Caco-2 (cell line): ENCODE measurements at regions of chr14 and their contacts with region 1.

Region 1: GRCh38 chr14:59028476-59029202 is 159.8 kb upstream of the DAAM1 start:
- DNase-seq: peak; percentile 67 to 71
- H3K4me3 ChIP-seq: no peak overlapping the region
- H3K4me3 Mint-ChIP-seq: no peak overlapping the region
- H3K27ac Mint-ChIP-seq: no peak overlapping the region
- H3K4me1 ChIP-seq: no peaks in the 10 kb centered on the region
- H3K4me1 Mint-ChIP-seq: peaks cover 9% of the 10 kb centered on the region
- H3K27me3 ChIP-seq: no peaks in the 10 kb centered on the region
- H3K27me3 Mint-ChIP-seq: peaks cover 7% of the 10 kb centered on the region
- CTCF ChIP-seq: peak; percentile 72 to 92

Region 2: DNA sequence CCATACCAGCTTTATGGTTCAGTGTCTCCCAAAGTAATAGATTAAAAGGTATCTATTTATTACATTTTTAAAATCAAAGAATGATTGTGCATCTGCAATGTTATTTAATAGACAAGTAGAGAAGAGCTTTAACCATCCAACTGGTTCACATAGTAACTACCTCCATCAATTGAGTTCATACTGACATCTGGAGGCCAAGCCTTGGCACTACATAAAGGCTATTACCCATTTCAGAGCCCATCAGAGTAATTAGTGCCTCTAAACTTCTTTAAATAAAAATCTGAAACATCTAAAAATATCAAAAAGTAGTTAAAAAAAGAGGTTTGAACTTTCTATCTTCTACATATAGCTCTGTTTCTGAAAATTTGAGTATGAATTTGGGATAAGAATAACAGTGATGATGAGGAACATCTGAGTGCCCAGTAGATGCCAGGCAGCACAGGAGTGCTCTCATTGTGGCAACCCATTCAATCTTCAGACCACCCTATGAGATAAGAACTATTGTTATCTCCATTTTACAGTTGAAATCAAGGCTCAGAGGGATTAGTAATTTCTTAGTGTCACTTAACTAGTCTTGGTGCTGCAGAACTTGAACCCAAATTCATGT is 26.9 kb after region 1 on chr14:
- CTCF ChIA-PET with region 1: interaction called, 9 read pairs
- POLR2A ChIA-PET with region 1: no interaction called
- intact Hi-C with region 1: loop called (anchors 1 kb)
- DNase-seq: peak in 1 of 2 experiments; percentile 37
- H3K4me3 ChIP-seq: no peak overlapping the region
- H3K4me3 Mint-ChIP-seq: no peak overlapping the region
- H3K27ac Mint-ChIP-seq: no peak overlapping the region
- H3K4me1 ChIP-seq: peaks cover 4% of the 10 kb centered on the region
- H3K4me1 Mint-ChIP-seq: peaks cover 9% of the 10 kb centered on the region
- H3K27me3 ChIP-seq: no peaks in the 10 kb centered on the region
- H3K27me3 Mint-ChIP-seq: no peaks in the 10 kb centered on the region
- CTCF ChIP-seq: peak; percentile 59 to 68

Region 3: GRCh38 chr14:59439256-59439965 is 410.8 kb after region 1 on chr14:
- CTCF ChIA-PET with region 1: no interaction called
- POLR2A ChIA-PET with region 1: no interaction called
- intact Hi-C with region 1: loop called (anchors 1 kb)
- DNase-seq: no peak
- H3K4me3 ChIP-seq: no peak overlapping the region
- H3K4me3 Mint-ChIP-seq: no peak overlapping the region
- H3K27ac Mint-ChIP-seq: no peak overlapping the region
- H3K4me1 ChIP-seq: no peaks in the 10 kb centered on the region
- H3K4me1 Mint-ChIP-seq: no peaks in the 10 kb centered on the region
- H3K27me3 ChIP-seq: no peaks in the 10 kb centered on the region
- H3K27me3 Mint-ChIP-seq: peaks cover 6% of the 10 kb centered on the region
- CTCF ChIP-seq: no peak